Left cardiac atrium (tissue), 4 donors: ENCODE measurements at regions of chr5 and their contacts with region 1.

Region 1: DNA sequence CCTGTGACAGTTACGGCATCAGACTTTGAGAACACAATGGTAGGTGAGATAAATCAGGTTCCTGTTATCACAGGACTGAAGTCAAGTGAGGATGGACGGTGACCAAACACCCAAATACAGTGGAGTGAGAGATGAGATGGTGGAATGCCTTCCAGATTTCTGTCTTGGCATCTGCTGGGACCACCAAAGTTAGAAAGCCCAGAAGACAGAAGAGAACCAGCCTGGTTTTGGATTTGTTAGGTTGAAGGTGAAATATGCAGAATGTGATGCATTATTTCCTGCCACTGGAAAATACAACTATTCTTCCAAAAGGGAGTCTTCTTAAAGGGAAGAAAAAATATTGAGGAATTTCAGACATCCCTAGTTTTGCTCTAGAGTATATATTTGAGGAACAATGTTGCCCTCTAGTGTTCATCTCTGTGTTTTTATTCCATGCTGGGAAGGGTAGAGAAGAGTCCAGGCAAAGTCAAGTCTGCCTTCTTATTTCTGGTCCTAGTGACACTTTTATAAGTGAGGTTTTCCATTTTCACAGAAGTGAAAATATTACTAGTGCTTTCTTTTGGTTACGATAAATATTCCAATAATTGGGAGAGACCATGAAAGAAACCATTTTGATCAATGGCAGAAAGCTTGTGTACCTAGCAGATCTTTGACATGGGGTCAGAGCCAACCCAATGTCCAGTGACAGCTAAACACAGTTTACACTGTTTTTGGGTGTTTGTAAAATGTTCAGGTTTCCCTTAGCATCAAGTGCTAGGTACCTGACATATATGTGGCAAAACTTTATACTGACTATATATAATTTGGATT is 142.3 kb upstream of the ANKH start:
- DNase-seq: no peak
- ATAC-seq: peak; percentile 80 to 85

Region 2: DNA sequence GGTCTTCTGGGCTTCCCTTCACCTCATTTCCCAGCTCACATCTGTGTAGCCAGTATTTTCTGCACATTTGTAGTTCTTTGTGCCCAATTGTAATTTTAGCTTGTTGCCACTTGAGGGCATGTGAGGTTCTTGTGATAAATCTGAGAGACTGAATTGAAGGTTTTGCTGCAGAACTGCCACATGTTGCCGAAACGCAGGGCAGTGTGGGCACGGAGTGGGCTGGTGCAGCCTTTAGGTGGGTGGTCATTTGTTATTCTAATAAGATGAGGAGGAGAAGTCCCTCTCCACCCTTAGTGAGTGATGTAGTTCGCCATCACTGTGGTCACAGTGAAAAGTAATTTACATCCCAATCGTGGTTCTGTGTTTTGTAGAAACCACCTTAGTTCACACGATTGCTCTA is 328.1 kb before region 1 on chr5:
- intact Hi-C with region 1: loop called in 1 of 2 experiments (anchors 5 kb)
- DNase-seq: no peak
- ATAC-seq: peak; percentile 40 to 54

Region 3: DNA sequence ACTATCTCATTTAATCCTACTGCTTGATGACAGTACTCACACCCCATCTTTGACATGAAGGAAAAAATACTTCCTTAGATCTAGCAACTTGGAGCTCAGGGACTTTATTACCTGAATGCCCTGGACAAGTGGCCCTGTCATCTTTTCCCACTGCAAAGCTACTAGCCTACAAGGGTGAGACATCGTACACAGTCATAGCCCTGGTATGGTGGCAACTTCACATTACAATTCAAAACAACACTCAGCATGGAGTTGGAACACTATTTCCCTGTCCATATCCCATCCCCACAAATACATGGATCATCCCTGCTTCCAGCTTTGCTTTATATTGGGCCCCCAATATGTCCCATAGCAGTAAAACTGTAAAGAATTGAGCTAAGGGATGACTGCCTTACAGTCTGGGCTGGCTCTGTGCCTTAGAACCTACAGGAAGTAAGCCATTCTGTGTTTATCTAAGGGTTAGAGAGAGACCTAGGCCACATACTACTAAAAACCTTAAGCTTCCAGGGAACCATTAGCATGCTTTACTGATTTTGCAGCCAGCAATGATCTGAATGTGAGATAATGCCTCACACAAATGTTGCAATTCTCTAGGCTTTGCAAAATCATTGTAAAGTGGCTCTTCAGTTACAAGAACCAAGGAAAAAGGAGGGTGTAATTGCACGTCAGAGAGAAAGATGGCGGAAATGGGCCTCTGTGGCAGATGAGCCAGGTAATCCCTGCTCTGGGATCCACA is 293.5 kb before region 1 on chr5:
- intact Hi-C with region 1: loop called in 1 of 2 experiments (anchors 5 kb)
- DNase-seq: no peak
- ATAC-seq: no peak

Region 4: GRCh38 chr5:15044521-15044920 is 30.7 kb after region 1 on chr5:
- intact Hi-C with region 1: no loop called
- DNase-seq: no peak
- ATAC-seq: no peak